Spleen (tissue), 13 donors: ENCODE measurements at regions of chr11 and their contacts with region 1.

Region 1: GRCh38 chr11:93652161-93652597 is 9.3 kb upstream of the CEP295 start:
- DNase-seq: no peak
- H3K4me3 ChIP-seq: no peak overlapping the region
- H3K27ac ChIP-seq: no peak overlapping the region
- H3K4me1 ChIP-seq: peaks cover 0 to 22% (median 1%) of the 10 kb centered on the region in 6 donors
- H3K27me3 ChIP-seq: peaks cover 0 to 7% (median 0%) of the 10 kb centered on the region in 7 donors
- CTCF ChIP-seq: peak; percentile 24 to 78 (median 58)
- POLR2A ChIP-seq: no peak

Region 2: DNA sequence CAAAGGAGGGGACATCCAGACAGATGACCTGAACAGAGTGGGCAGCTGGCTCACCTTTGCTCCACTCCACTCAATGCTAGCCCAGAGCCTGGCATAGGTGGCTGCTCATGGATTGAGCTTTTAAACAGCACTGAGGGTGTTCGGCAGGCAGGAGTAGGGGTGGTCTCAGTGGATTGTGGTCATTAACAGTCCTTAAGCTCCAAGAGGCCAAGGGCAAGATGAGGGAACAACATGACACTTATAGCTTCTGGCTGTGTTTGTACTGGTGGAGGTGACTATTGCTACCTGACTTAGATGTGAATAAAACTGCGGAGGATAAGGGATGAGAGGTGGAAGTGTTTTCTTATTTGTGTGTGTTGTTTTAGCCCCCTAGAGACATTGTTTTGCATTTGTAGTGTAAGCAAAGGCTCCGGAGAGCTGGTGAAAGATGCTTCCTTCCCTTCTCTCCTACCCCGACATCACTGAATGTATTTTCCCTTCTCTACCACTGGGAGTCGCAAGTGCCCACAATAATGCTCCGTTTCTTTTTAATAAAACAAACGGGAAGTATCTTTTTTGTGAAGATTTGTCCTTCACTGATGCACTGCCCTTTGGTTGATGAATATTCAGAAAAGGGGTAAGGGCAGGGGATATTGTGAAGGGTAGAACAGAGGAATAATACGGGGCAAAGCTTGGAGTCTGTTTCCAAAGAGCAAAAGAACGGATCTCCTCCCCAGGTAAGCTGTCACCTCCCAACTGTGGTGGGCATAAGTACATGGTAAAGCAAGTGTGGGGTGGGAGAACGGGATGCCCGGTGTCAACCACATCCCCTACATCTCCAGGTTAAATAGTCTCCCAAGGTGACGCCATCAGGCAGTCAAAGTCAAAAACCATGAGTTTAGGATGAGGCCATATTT is 710.3 kb before region 1 on chr11:
- intact Hi-C with region 1: loop called (anchors 10 kb)
- DNase-seq: no peak
- H3K4me3 ChIP-seq: no peak overlapping the region
- H3K27ac ChIP-seq: no peak overlapping the region
- H3K4me1 ChIP-seq: no peaks in the 10 kb centered on the region
- H3K27me3 ChIP-seq: peaks cover 0 to 14% (median 0%) of the 10 kb centered on the region in 7 donors
- CTCF ChIP-seq: peak in 9 of 11 experiments; percentile 27 to 62 (median 51)
- POLR2A ChIP-seq: no peak

Region 3: GRCh38 chr11:93234602-93235207 is 417.5 kb before region 1 on chr11:
- intact Hi-C with region 1: loop called (anchors 5 kb)
- DNase-seq: peak; percentile 85
- H3K4me3 ChIP-seq: no peak overlapping the region
- H3K27ac ChIP-seq: no peak overlapping the region
- H3K4me1 ChIP-seq: peaks cover 0 to 4% (median 0%) of the 10 kb centered on the region in 6 donors
- H3K27me3 ChIP-seq: peaks cover 0 to 6% (median 0%) of the 10 kb centered on the region in 7 donors
- CTCF ChIP-seq: peak; percentile 71 to 93 (median 86)
- POLR2A ChIP-seq: no peak

Region 4: GRCh38 chr11:93543292-93543977 is 108.7 kb before region 1 on chr11 and contains the start of gene SMCO4:
- intact Hi-C with region 1: loop called (anchors 10 kb)
- DNase-seq: peak; percentile 94
- H3K4me3 ChIP-seq: peak within 1 kb of the TSS; percentile 63 to 91 (median 72)
- H3K27ac ChIP-seq: peak within 1 kb of the TSS; percentile 53 to 95 (median 91)
- H3K4me1 ChIP-seq: peaks cover 0 to 58% (median 40%) of the 10 kb centered on the region in 6 donors
- H3K27me3 ChIP-seq: peaks cover 0 to 15% (median 0%) of the 10 kb centered on the region in 7 donors
- CTCF ChIP-seq: peak; percentile 31 to 83 (median 74)
- POLR2A ChIP-seq: no peak
- total RNA-seq, gene SMCO4: 48.1 to 74.1 (median 52.8) TPM

Region 5: DNA sequence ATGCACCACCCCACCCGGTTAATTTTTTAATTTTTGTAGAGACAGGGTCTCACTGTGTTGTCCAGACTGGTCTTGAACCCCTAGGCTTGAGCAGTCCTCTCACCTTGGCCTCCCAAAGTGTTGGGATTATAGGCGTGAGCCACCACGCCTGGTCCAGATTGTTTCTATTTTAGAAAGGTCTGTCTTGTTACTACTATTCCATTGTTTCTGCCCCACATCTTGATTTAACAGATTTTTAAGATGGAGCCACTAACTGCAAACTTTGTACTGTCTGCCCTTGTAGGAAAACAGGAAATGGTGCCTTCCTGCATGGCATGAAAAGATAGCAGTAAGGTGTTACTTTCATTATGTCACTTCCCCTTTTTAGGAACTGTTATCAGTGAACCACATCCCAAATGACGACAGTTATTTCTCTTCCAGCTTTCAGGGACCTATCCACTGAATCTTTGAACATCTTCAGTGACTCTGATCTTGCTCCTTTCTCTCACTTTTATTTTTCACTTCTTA is 65.9 kb after region 1 on chr11:
- intact Hi-C with region 1: no loop called
- DNase-seq: no peak
- H3K4me3 ChIP-seq: peak overlapping the region in 1 of 8 donors; percentile 39
- H3K27ac ChIP-seq: peak overlapping the region in 7 of 8 donors; percentile 45 to 86 (median 73)
- H3K4me1 ChIP-seq: peaks cover 11 to 34% (median 17%) of the 10 kb centered on the region in 6 donors
- H3K27me3 ChIP-seq: no peaks in the 10 kb centered on the region
- CTCF ChIP-seq: no peak
- POLR2A ChIP-seq: no peak

Region 6: DNA sequence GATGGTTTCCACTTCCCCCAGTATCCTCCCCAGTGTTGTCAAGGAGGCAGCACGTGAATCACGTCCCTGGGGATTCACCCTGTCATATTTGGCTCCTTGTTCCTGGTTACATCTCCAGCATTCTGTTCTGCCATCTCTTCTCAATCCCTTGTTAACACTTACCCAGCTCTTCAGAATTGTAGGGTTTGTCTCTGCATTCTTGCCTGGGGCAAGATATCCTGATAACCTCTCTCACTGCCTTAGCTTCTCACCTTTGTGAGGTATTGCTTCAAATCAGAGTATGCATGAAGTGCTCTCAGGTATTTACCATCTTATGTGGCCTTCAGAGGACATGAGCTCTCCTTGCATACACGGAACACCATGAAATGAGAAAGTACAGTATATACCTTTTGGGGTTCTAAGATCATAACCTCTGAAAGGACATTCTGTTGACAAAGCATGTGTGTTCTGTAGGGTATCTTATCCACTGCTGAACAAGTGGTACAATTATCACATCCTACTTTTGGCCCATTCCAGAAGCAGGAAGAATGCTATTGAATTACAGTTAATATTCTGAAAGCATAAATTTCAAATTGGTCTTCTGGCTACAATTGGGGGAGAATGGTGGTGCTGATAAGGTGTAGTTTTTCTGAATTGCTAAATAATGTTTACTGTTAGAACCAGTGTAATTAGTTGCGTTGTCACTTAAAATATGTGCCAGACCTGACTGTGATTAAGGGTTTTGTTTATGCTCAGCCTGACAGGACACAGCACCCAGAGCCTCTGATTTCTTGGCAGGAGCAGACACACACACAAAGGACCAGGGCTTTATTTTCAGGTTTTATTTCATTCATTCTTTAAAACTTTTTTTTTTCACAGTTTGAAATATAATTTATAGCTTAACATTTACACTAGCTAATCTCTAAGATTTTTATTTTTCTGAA is 165.5 kb after region 1 on chr11:
- intact Hi-C with region 1: no loop called
- DNase-seq: no peak
- H3K4me3 ChIP-seq: no peak overlapping the region
- H3K27ac ChIP-seq: no peak overlapping the region
- H3K4me1 ChIP-seq: no peaks in the 10 kb centered on the region
- H3K27me3 ChIP-seq: no peaks in the 10 kb centered on the region
- CTCF ChIP-seq: no peak
- POLR2A ChIP-seq: no peak